Natural killer cell (primary cell): ENCODE measurements at regions of chr11 and their contacts with region 1.

Region 1: GRCh38 chr11:5258543-5259262 is 4.1 kb upstream of the HBG2 start:
- DNase-seq: no peak
- ATAC-seq: no peak
- H3K4me3 ChIP-seq: no peak overlapping the region
- H3K4me3 Mint-ChIP-seq: no peak overlapping the region
- H3K27ac ChIP-seq: no peak overlapping the region
- H3K27ac Mint-ChIP-seq: no peak overlapping the region
- H3K4me1 ChIP-seq: no peaks in the 10 kb centered on the region
- H3K4me1 Mint-ChIP-seq: no peaks in the 10 kb centered on the region
- H3K27me3 ChIP-seq: no peaks in the 10 kb centered on the region
- H3K27me3 Mint-ChIP-seq: peaks cover 0 to 3% of the 10 kb centered on the region in 2 donors
- CTCF ChIP-seq: no peak

Region 2: DNA sequence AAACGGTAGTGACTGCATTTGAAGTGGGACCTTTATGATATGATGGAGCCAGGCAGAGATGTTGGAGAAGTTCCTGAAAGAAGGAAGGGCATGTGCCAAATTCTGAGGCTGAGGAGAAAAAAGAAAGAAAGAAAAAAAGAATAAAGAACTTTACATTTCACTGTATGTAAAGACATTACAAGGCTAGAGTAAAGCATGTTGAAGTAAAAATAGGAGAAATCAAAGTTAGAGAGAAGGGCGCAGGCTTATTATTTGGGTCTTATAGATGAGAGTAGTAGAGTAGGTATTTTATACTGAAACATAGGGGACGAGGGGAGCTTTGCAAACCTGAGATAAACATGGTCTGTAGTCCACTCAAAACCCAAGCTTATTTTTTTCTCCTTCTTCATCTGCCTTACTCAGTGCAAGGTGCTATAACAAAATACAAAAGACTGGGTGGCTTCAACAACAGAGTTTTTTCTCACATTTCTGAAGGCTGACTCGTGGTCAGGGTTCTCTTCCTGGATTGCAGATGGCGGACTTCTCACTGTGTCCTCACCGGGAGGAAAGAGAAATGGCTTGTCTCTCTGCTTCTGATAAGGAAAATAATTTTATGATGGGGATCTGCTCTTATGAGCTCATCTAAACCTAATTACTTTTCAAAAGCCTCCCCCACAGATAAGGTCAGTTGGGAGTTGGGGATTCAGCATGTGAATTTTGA is 11.8 kb before region 1 on chr11:
- intact Hi-C with region 1: loop called (anchors 1 kb)
- DNase-seq: no peak
- ATAC-seq: no peak
- H3K4me3 ChIP-seq: no peak overlapping the region
- H3K4me3 Mint-ChIP-seq: no peak overlapping the region
- H3K27ac ChIP-seq: no peak overlapping the region
- H3K27ac Mint-ChIP-seq: no peak overlapping the region
- H3K4me1 ChIP-seq: no peaks in the 10 kb centered on the region
- H3K4me1 Mint-ChIP-seq: no peaks in the 10 kb centered on the region
- H3K27me3 ChIP-seq: no peaks in the 10 kb centered on the region
- H3K27me3 Mint-ChIP-seq: no peaks in the 10 kb centered on the region
- CTCF ChIP-seq: no peak

Region 3: GRCh38 chr11:5550440-5551095 is 291.9 kb after region 1 on chr11:
- intact Hi-C with region 1: no loop called
- DNase-seq: no peak
- ATAC-seq: no peak
- H3K4me3 ChIP-seq: no peak overlapping the region
- H3K4me3 Mint-ChIP-seq: no peak overlapping the region
- H3K27ac ChIP-seq: no peak overlapping the region
- H3K27ac Mint-ChIP-seq: no peak overlapping the region
- H3K4me1 ChIP-seq: no peaks in the 10 kb centered on the region
- H3K4me1 Mint-ChIP-seq: no peaks in the 10 kb centered on the region
- H3K27me3 ChIP-seq: no peaks in the 10 kb centered on the region
- H3K27me3 Mint-ChIP-seq: peaks cover 18 to 29% of the 10 kb centered on the region in 2 donors
- CTCF ChIP-seq: no peak

Region 4: DNA sequence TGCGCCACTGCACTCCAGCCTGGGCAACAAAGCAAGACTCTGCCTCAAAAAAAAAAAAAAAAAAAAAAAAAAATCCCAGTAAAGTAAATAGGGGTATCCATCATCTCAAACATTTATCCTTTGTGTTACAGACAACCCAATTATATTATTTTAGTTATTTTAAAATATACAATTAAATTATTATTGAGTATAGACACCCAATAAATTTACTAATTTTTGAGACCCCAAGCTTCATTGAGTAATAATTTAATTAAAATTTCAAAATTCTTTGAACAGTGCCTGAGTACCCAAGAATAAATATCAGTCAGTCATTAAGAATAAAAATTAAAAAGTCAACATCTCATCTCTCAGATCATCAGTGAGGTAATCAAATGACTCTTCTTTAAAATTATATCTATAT is 495.2 kb after region 1 on chr11 and contains the start of gene OR52N4:
- intact Hi-C with region 1: no loop called
- DNase-seq: no peak
- ATAC-seq: no peak
- H3K4me3 ChIP-seq: no peak within 1 kb of the TSS
- H3K4me3 Mint-ChIP-seq: no peak within 1 kb of the TSS
- H3K27ac ChIP-seq: no peak within 1 kb of the TSS
- H3K27ac Mint-ChIP-seq: no peak within 1 kb of the TSS
- H3K4me1 ChIP-seq: no peaks in the 10 kb centered on the region
- H3K4me1 Mint-ChIP-seq: no peaks in the 10 kb centered on the region
- H3K27me3 ChIP-seq: no peaks in the 10 kb centered on the region
- H3K27me3 Mint-ChIP-seq: peaks cover 9 to 35% of the 10 kb centered on the region in 2 donors
- CTCF ChIP-seq: no peak
- total RNA-seq, gene OR52N4: 1.2 to 2.1 (median 1.3) TPM